ENCODE measurements at regions of chr11 and their contacts with region 1.

Region 1: GRCh38 chr11:9506489-9507276 is 45.9 kb downstream of the ZNF143 start:
- DNase-seq: no peak

Region 2: GRCh38 chr11:9015677-9016076 is 491.0 kb before region 1 on chr11:
- intact Hi-C with region 1: loop called (anchors 10 kb)
- DNase-seq: no peak

Measured in cardiac septum (tissue), 1 donor.